IMR-90 (cell line): ENCODE measurements at regions of chr5 and their contacts with region 1.

Region 1: DNA sequence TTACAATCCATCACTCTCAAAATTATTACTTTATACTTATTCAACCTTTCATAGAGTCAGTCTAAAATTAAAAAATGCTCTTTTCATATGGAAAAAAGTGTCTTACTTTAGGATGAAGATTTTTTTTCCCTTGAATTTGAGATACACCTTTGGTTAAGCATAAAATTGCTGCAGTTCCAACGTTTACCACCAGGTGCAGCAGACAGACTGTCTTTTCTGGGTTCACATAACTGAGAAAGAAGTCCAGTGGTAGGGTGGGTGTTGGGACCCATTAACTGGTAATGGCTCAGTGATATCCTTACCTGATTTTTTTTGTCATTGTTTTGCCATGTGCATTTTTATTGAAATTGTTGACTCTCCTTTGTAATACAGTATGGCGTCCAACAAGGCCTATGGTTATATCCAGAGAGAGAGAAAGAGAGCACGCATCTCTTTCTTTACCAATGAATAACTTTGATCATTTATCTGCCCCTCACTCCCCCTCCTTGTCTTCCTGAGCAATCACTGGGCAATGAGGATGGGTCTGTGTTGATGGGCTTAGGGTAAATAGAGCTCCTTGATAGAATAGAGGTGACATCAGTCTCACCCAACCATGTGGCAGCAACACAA is 98.4 kb downstream of the FBXL7 start:
- DNase-seq: no peak
- ATAC-seq: no peak
- H3K4me3 ChIP-seq: no peak overlapping the region
- H3K27ac ChIP-seq: no peak overlapping the region
- H3K4me1 ChIP-seq: no peaks in the 10 kb centered on the region
- H3K27me3 ChIP-seq: no peaks in the 10 kb centered on the region
- CTCF ChIP-seq: peak; percentile 35; the same call in 1 of the 2 replicates
- POLR2A ChIP-seq: no peak
- RAD21 ChIP-seq: peak; percentile 26; the same call in 1 of the 2 replicates

Region 2: DNA sequence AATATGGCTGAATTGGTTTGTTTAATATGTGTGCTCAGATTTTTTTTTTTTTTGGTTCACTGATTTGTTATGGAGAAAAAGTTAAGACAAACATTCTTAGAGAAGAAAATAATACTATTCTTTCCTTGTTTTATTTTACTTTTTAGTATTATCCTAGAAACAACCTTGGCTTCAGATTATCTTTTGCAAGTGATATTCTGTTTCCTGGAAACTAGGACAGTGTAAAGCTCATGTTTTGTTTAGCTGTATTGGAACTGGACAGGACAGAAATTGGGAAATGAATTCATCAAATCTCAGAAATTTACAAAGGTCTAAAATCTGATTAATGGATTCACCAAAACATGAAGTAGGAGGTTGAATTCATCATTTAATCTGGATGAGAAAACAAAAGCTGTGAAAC is 32.0 kb after region 1 on chr5:
- CTCF ChIA-PET with region 1: no interaction called
- POLR2A ChIA-PET with region 1: interaction called, 10 read pairs
- dilution Hi-C with region 1: no loop called
- in situ Hi-C with region 1: no loop called
- intact Hi-C with region 1: no loop called
- DNase-seq: no peak
- ATAC-seq: no peak
- H3K4me3 ChIP-seq: no peak overlapping the region
- H3K27ac ChIP-seq: no peak overlapping the region
- H3K4me1 ChIP-seq: peaks cover 2% of the 10 kb centered on the region
- H3K27me3 ChIP-seq: no peaks in the 10 kb centered on the region
- CTCF ChIP-seq: no peak
- POLR2A ChIP-seq: no peak
- RAD21 ChIP-seq: no peak

Region 3: GRCh38 chr5:15731699-15732098 is 133.3 kb after region 1 on chr5:
- CTCF ChIA-PET with region 1: no interaction called
- POLR2A ChIA-PET with region 1: no interaction called
- dilution Hi-C with region 1: no loop called
- in situ Hi-C with region 1: no loop called
- intact Hi-C with region 1: no loop called
- DNase-seq: no peak
- ATAC-seq: no peak
- H3K4me3 ChIP-seq: no peak overlapping the region
- H3K27ac ChIP-seq: no peak overlapping the region
- H3K4me1 ChIP-seq: no peaks in the 10 kb centered on the region
- H3K27me3 ChIP-seq: no peaks in the 10 kb centered on the region
- CTCF ChIP-seq: no peak
- POLR2A ChIP-seq: no peak
- RAD21 ChIP-seq: no peak